Naive thymus-derived CD4-positive, alpha-beta T cell (primary cell): ENCODE measurements at regions of chr9 and their contacts with region 1.

Region 1: DNA sequence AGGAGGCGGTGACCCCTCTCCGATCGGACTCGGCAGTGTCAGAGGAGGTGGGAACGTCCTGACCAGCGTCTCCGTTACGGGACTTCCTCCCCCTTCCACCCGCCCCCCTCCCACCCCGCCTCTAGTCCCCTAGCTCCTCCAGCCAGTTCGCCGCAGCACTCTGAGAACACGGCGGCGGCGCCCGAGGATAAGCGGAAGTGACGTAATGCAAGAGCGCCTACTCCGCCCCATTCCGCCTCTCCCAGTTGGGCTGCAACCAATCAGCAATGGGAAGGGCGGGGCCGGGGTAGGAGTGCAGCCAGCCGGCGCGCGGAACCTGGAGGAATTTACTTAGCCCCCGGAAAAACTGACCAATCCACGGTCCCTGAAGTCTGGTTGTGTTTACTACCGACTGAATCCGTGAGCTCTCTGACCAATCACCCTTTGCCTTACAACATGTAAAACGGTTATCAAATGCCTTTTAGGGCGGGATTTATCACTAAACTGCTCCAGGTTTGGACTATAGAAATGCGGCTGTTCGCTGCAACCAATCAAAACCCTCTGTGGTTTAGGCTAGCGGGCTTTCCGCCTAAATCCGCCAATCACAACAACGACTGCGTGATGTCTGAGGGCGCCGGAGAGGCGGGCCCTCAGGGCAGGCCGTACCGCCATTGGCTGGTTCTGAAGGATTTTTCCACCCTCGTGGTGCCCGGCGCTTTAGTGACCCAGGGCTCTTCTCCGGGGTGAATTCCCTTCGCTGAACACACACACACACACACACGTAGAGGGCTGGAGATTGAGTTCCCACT is at the start of gene ZBTB5:
- DNase-seq: peak; percentile 93 to 99 (median 99)
- ATAC-seq: peak; percentile 87
- H3K4me3 ChIP-seq: peak within 1 kb of the TSS; percentile 76
- H3K4me3 Mint-ChIP-seq: peak within 1 kb of the TSS; percentile 87 to 99 (median 96)
- H3K27ac ChIP-seq: peak within 1 kb of the TSS; percentile 89
- H3K27ac Mint-ChIP-seq: peak within 1 kb of the TSS; percentile 88 to 98 (median 95)
- H3K4me1 ChIP-seq: peaks cover 12 to 24% of the 10 kb centered on the region in 2 donors
- H3K4me1 Mint-ChIP-seq: peaks cover 27 to 43% (median 35%) of the 10 kb centered on the region in 7 donors
- H3K27me3 ChIP-seq: no peaks in the 10 kb centered on the region
- H3K27me3 Mint-ChIP-seq: no peaks in the 10 kb centered on the region
- total RNA-seq, gene ZBTB5: 8.5 to 16.8 (median 14.8) TPM

Region 2: GRCh38 chr9:36258208-36258988 is 1207.0 kb before region 1 on chr9 and contains the start of gene GNE:
- CTCF ChIA-PET with region 1: no interaction called
- POLR2A ChIA-PET with region 1: no interaction called
- intact Hi-C with region 1: loop called in 1 of 2 experiments (anchors 1 kb)
- DNase-seq: peak; percentile 92 to 99 (median 96)
- ATAC-seq: peak; percentile 96
- H3K4me3 ChIP-seq: peak within 1 kb of the TSS; percentile 98
- H3K4me3 Mint-ChIP-seq: peak within 1 kb of the TSS; percentile 96 to 100 (median 98)
- H3K27ac ChIP-seq: peak within 1 kb of the TSS; percentile 93
- H3K27ac Mint-ChIP-seq: peak within 1 kb of the TSS; percentile 92 to 98 (median 96)
- H3K4me1 ChIP-seq: peaks cover 7 to 9% of the 10 kb centered on the region in 2 donors
- H3K4me1 Mint-ChIP-seq: peaks cover 0 to 14% (median 12%) of the 10 kb centered on the region in 7 donors
- H3K27me3 ChIP-seq: no peaks in the 10 kb centered on the region
- H3K27me3 Mint-ChIP-seq: peaks cover 0 to 2% (median 0%) of the 10 kb centered on the region in 5 donors
- total RNA-seq, gene GNE: 12.6 to 18.5 (median 16.0) TPM

Region 3: DNA sequence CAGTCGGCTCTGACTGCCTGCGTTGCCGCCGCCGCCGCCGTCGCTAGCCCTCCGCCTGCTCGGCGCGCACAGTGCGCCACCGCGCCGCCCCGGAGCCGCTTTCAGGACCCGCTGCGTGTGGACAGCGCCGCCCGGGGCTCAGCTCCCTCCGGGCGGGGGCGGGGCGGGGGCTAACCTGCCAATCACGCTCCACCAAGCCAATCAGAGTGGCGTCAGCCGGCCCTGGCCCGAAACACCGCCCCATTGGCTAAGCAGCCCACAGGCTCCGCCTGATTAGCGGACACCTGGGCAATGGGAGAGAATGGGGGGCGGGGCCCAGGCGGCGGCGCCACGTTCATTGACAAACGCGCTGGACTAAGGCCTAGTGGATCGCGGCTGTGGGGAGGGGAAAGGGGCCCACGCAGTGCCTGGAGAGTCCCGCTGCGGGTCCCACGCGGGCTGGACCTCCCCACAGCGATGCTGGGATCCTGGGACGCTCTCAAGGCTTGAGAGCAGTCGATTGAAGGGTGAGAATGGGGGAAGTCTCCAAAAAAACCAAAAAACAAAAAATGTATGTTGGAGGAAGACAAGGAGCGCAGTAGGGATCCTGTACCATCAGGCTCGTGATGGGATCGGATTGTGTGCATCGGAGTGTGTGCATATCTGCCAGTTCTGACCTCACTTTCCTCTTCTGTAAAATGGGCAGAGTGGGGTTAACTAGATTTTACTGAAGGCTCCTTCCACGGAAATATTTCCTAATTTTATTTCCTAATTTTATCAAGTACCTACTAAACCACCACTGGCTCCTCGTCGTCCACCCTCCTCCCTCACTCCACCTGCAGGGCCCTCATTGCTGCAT is 437.6 kb before region 1 on chr9:
- CTCF ChIA-PET with region 1: no interaction called
- POLR2A ChIA-PET with region 1: no interaction called
- intact Hi-C with region 1: loop called in 1 of 2 experiments (anchors 1 kb)
- DNase-seq: peak; percentile 67 to 87 (median 77)
- ATAC-seq: peak; percentile 96
- H3K4me3 ChIP-seq: peak overlapping the region; percentile 29
- H3K4me3 Mint-ChIP-seq: peak overlapping the region; percentile 38 to 77 (median 62)
- H3K27ac ChIP-seq: no peak overlapping the region
- H3K27ac Mint-ChIP-seq: peak overlapping the region in 1 of 9 donors; percentile 42
- H3K4me1 ChIP-seq: peaks cover 25 to 56% of the 10 kb centered on the region in 2 donors
- H3K4me1 Mint-ChIP-seq: peaks cover 18 to 50% (median 37%) of the 10 kb centered on the region in 7 donors
- H3K27me3 ChIP-seq: peaks cover 34 to 56% of the 10 kb centered on the region in 2 donors
- H3K27me3 Mint-ChIP-seq: peaks cover 73 to 95% (median 81%) of the 10 kb centered on the region in 5 donors

Region 4: GRCh38 chr9:37187292-37187691 is 278.2 kb before region 1 on chr9:
- CTCF ChIA-PET with region 1: no interaction called
- POLR2A ChIA-PET with region 1: no interaction called
- intact Hi-C with region 1: no loop called
- DNase-seq: no peak
- ATAC-seq: no peak
- H3K4me3 ChIP-seq: no peak overlapping the region
- H3K4me3 Mint-ChIP-seq: peak overlapping the region in 8 of 10 donors; percentile 11 to 84 (median 70)
- H3K27ac ChIP-seq: no peak overlapping the region
- H3K27ac Mint-ChIP-seq: peak overlapping the region in 7 of 9 donors; percentile 17 to 91 (median 82)
- H3K4me1 ChIP-seq: peaks cover 4 to 15% of the 10 kb centered on the region in 2 donors
- H3K4me1 Mint-ChIP-seq: peaks cover 13 to 55% (median 35%) of the 10 kb centered on the region in 7 donors
- H3K27me3 ChIP-seq: no peaks in the 10 kb centered on the region
- H3K27me3 Mint-ChIP-seq: no peaks in the 10 kb centered on the region

Region 5: GRCh38 chr9:37290940-37291485 is 174.4 kb before region 1 on chr9:
- CTCF ChIA-PET with region 1: no interaction called
- POLR2A ChIA-PET with region 1: no interaction called
- intact Hi-C with region 1: no loop called
- DNase-seq: no peak
- ATAC-seq: peak; percentile 32
- H3K4me3 ChIP-seq: no peak overlapping the region
- H3K4me3 Mint-ChIP-seq: peak overlapping the region in 2 of 10 donors; percentile 3 to 53
- H3K27ac ChIP-seq: no peak overlapping the region
- H3K27ac Mint-ChIP-seq: peak overlapping the region in 1 of 9 donors; percentile 50
- H3K4me1 ChIP-seq: no peaks in the 10 kb centered on the region
- H3K4me1 Mint-ChIP-seq: peaks cover 27 to 68% (median 55%) of the 10 kb centered on the region in 7 donors
- H3K27me3 ChIP-seq: no peaks in the 10 kb centered on the region
- H3K27me3 Mint-ChIP-seq: no peaks in the 10 kb centered on the region

Region 6: GRCh38 chr9:37415011-37415719 is 50.3 kb before region 1 on chr9:
- CTCF ChIA-PET with region 1: interaction called, 3 read pairs
- POLR2A ChIA-PET with region 1: no interaction called
- intact Hi-C with region 1: loop called in 1 of 2 experiments (anchors 2 kb)
- DNase-seq: peak; percentile 55 to 77 (median 70)
- ATAC-seq: peak; percentile 94
- H3K4me3 ChIP-seq: no peak overlapping the region
- H3K4me3 Mint-ChIP-seq: peak overlapping the region in 7 of 10 donors; percentile 27 to 72 (median 49)
- H3K27ac ChIP-seq: no peak overlapping the region
- H3K27ac Mint-ChIP-seq: peak overlapping the region in 4 of 9 donors; percentile 76 to 92 (median 84)
- H3K4me1 ChIP-seq: no peaks in the 10 kb centered on the region
- H3K4me1 Mint-ChIP-seq: peaks cover 5 to 11% (median 7%) of the 10 kb centered on the region in 7 donors
- H3K27me3 ChIP-seq: no peaks in the 10 kb centered on the region
- H3K27me3 Mint-ChIP-seq: peaks cover 0 to 7% (median 5%) of the 10 kb centered on the region in 5 donors

Region 7: DNA sequence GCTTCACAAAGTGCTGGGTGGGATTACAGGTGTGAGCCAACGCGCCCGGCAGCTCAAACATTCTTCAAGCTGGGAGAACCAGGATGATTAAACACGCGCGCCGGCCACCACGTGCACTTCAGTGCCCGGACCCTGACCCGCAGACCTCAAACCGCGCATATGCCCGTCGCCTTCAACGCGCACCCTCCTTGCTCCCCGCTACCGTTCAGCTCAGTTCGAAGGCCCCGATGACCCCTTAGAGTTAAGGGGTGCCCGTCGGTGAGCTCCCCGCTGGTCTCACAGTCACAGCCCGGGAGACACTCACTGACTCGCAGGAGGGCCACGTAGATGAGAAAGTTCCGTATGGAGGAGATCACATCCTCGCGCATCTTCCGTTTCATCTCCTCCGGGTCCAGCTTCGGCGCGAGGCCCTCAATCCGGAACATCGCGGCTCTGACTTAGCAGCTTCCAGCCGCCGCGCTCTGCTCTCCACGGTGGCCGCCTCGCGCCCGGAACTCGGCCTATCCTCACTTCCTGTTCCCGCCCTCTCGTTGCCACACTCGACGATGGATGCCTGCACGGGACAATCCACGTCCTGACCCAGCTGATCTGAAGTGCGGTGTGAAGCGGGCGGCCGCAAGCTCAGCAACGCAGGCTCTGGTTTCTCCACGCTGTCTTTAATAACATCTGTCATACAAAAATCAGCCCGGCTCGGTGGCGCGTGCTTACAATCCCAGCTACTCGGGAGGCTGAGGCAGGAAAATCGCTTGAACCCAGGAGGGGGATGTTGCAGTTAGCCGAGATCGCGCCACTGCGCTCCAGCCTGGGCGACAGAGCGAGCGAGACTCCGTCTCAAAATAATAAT is 126.9 kb after region 1 on chr9 and contains the start of gene TOMM5:
- CTCF ChIA-PET with region 1: no interaction called
- POLR2A ChIA-PET with region 1: no interaction called
- intact Hi-C with region 1: loop called (anchors 1 kb)
- DNase-seq: peak; percentile 80 to 92 (median 90)
- ATAC-seq: peak; percentile 99
- H3K4me3 ChIP-seq: peak within 1 kb of the TSS; percentile 95
- H3K4me3 Mint-ChIP-seq: peak within 1 kb of the TSS; percentile 93 to 100 (median 98)
- H3K27ac ChIP-seq: peak within 1 kb of the TSS; percentile 88
- H3K27ac Mint-ChIP-seq: peak within 1 kb of the TSS; percentile 93 to 98 (median 96)
- H3K4me1 ChIP-seq: peaks cover 6 to 12% of the 10 kb centered on the region in 2 donors
- H3K4me1 Mint-ChIP-seq: peaks cover 8 to 51% (median 44%) of the 10 kb centered on the region in 7 donors
- H3K27me3 ChIP-seq: no peaks in the 10 kb centered on the region
- H3K27me3 Mint-ChIP-seq: peaks cover 0 to 22% (median 9%) of the 10 kb centered on the region in 5 donors
- total RNA-seq, gene TOMM5: 33.6 to 86.8 (median 44.7) TPM

Region 8: GRCh38 chr9:37800631-37801286 is 335.3 kb after region 1 on chr9 and contains the start of gene DCAF10:
- CTCF ChIA-PET with region 1: no interaction called
- POLR2A ChIA-PET with region 1: no interaction called
- intact Hi-C with region 1: loop called in 1 of 2 experiments (anchors 1 kb)
- DNase-seq: peak; percentile 80 to 97 (median 87)
- ATAC-seq: peak; percentile 95
- H3K4me3 ChIP-seq: peak within 1 kb of the TSS; percentile 97
- H3K4me3 Mint-ChIP-seq: peak within 1 kb of the TSS; percentile 86 to 95 (median 93)
- H3K27ac ChIP-seq: peak within 1 kb of the TSS; percentile 69
- H3K27ac Mint-ChIP-seq: peak within 1 kb of the TSS; percentile 71 to 95 (median 90)
- H3K4me1 ChIP-seq: peaks cover 19 to 26% of the 10 kb centered on the region in 2 donors
- H3K4me1 Mint-ChIP-seq: peaks cover 24 to 55% (median 42%) of the 10 kb centered on the region in 7 donors
- H3K27me3 ChIP-seq: no peaks in the 10 kb centered on the region
- H3K27me3 Mint-ChIP-seq: no peaks in the 10 kb centered on the region
- total RNA-seq, gene DCAF10: 12.1 to 22.5 (median 21.3) TPM